Mammary epithelial cell (primary cell): ENCODE measurements at regions of chr3 and their contacts with region 1.

Region 1: DNA sequence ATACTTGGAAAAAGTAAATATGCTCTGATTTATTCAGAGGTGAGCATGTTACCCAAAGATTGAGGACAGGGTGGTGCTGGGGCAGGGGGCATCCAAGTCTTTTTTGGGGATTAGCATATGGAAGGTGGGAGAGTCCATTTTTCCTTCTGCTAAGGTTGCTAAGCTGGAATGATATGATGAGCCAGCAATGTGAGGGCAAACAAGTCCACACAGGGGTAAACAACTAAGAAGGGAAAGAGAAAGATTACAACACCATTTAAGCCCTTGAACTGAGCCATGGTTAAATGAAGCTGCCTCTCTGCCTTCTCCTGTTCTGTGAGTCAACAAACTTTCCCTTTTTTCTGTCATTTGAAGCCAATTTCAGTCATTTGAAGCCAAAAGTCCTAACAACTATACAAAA is 89.0 kb downstream of the RPL22L1 start:
- DNase-seq: peak; percentile 61
- H3K4me3 ChIP-seq: no peak overlapping the region
- H3K27ac ChIP-seq: no peak overlapping the region
- H3K4me1 ChIP-seq: no peaks in the 10 kb centered on the region
- H3K27me3 ChIP-seq: no peaks in the 10 kb centered on the region
- CTCF ChIP-seq: no peak

Region 2: DNA sequence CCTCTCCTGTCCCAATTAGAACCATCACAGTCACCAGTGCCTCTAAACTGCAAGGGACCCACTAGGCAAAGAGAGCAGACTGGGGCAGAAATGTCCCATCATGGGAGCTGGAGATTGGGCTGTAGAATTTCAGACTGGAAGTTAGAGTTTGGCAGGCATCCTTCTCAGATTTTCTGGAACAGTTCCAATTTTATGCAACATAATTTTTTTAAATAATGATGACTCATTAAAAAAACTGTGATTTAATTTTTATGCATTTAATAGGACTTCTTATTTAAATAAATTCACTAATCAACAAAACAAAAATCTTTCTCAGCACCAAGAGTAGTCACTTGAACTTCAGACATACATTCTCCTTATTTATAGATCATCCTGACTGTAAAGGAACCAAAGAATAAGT is 110.5 kb before region 1 on chr3:
- CTCF ChIA-PET with region 1: no interaction called
- dilution Hi-C with region 1: no loop called
- in situ Hi-C with region 1: no loop called
- intact Hi-C with region 1: no loop called
- DNase-seq: no peak
- H3K4me3 ChIP-seq: no peak overlapping the region
- H3K27ac ChIP-seq: no peak overlapping the region
- H3K4me1 ChIP-seq: no peaks in the 10 kb centered on the region
- H3K27me3 ChIP-seq: no peaks in the 10 kb centered on the region
- CTCF ChIP-seq: no peak

Region 3: GRCh38 chr3:170740726-170741591 is 40.0 kb before region 1 on chr3:
- CTCF ChIA-PET with region 1: interaction called, 13 read pairs
- dilution Hi-C with region 1: no loop called
- in situ Hi-C with region 1: no loop called
- intact Hi-C with region 1: no loop called
- DNase-seq: peak; percentile 73
- H3K4me3 ChIP-seq: no peak overlapping the region
- H3K27ac ChIP-seq: peak overlapping the region; percentile 79
- H3K4me1 ChIP-seq: peaks cover 44% of the 10 kb centered on the region
- H3K27me3 ChIP-seq: no peaks in the 10 kb centered on the region
- CTCF ChIP-seq: no peak